Sigmoid colon (tissue), 7 donors: ENCODE measurements at regions of chr1 and their contacts with region 1.

Region 1: DNA sequence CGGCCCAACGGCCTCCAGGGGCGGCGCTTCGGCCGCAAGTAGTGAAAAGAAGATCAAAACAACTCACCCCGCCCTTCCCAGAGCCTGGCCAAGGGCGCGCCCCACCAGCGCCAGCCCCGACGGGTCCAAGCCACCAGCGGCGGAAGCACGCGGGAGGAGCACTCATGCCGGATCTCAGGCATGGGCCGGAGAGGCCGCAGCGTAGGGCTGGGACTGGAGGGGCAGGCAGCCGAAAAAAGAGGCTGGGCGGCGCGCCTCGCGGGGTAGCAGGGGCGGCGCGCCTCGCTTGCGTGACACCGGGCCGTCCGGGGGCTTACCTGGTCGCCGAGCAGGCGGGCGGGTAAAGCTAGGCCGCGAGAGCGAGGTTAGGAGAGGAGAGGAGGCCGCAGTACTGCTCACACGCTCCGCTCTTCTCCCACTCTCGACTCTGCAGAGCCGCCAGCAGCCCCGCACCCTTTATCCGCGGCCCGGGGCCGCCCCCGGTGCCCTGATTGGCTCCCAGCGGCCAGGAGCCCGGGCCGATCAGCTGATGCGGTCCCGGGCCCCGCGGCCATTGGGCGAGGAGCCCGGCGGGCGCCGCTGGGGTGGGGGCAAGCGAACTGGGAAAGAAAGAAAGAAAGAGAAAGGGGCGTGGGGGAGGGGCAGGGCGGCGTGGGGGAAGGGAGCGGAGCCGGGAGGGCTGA is at the start of gene GLUL:
- DNase-seq: peak; percentile 98
- H3K4me3 ChIP-seq: peak within 1 kb of the TSS; percentile 86 to 96 (median 92)
- H3K27ac ChIP-seq: peak within 1 kb of the TSS; percentile 97 to 100 (median 99)
- H3K4me1 ChIP-seq: peaks cover 0 to 40% (median 31%) of the 10 kb centered on the region in 4 donors
- H3K27me3 ChIP-seq: no peaks in the 10 kb centered on the region
- CTCF ChIP-seq: peak in 2 of 4 experiments; percentile 32 to 40
- EP300 ChIP-seq: no peak
- POLR2A ChIP-seq: peak; percentile 95 to 97
- total RNA-seq, gene GLUL: 757 to 1,489 (median 1,456) TPM

Region 2: DNA sequence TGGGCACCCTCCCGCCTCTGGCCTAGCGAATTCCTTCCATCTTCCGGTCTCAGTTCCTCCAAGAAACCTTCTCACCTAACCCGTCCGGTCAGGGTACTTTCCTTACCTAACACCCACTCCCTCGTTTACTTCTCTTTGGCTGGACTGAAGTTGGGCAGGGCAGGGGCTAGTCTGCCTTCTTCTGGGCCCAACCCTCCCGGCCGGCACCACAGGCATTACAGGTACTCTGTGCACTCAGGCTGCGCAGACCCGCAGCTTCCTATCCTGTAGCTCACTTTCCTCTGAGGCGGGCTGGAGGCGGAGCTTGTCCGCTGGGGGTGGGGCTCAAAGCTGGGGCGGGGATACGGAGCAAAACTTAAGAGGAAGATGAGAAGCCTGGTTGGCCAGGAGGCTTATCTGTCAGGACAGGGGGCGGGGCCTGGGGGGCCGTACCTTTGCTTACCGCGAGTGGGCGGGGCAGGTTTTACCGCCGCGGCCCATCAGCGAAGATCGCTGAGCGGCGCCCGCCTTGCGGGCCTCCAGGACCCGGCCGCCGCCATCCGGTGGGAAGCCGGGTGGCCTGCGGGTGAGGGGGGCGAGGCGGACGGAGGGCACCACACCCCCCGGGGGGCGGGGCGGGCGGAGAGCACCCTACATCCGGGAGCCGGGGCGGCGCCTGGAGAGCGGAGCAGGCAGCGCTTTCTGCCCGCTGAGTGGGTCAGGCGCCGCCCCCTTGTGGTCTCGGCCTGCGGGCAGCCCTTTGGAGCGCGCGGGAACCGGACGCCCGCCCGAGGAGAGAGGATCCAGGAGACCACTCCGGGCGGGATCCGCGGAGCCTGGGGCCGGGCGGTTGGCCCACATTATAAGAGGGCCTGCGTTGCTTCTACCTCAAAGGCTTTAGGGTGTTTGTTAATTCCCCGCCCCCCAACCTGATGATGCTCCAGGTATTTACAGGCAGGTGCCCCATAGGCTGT is 361.8 kb before region 1 on chr1:
- intact Hi-C with region 1: loop called (anchors 2 kb)
- DNase-seq: peak; percentile 98
- H3K4me3 ChIP-seq: peak overlapping the region; percentile 50 to 68 (median 55)
- H3K27ac ChIP-seq: peak overlapping the region; percentile 66 to 88 (median 76)
- H3K4me1 ChIP-seq: peaks cover 0 to 9% (median 4%) of the 10 kb centered on the region in 4 donors
- H3K27me3 ChIP-seq: no peaks in the 10 kb centered on the region
- CTCF ChIP-seq: peak; percentile 19 to 60 (median 32)
- EP300 ChIP-seq: no peak
- POLR2A ChIP-seq: peak; percentile 20 to 53

Region 3: GRCh38 chr1:182143154-182143657 is 248.3 kb before region 1 on chr1:
- intact Hi-C with region 1: loop called (anchors 1 kb)
- DNase-seq: peak; percentile 96
- H3K4me3 ChIP-seq: no peak overlapping the region
- H3K27ac ChIP-seq: peak overlapping the region; percentile 90 to 94 (median 93)
- H3K4me1 ChIP-seq: peaks cover 0 to 30% (median 27%) of the 10 kb centered on the region in 4 donors
- H3K27me3 ChIP-seq: no peaks in the 10 kb centered on the region
- CTCF ChIP-seq: peak; percentile 86 to 97 (median 95)
- EP300 ChIP-seq: no peak
- POLR2A ChIP-seq: no peak

Region 4: GRCh38 chr1:182301467-182302198 is 89.9 kb before region 1 on chr1:
- intact Hi-C with region 1: loop called (anchors 2 kb)
- DNase-seq: peak; percentile 71
- H3K4me3 ChIP-seq: no peak overlapping the region
- H3K27ac ChIP-seq: peak overlapping the region in 1 of 4 donors; percentile 10
- H3K4me1 ChIP-seq: peaks cover 0 to 38% (median 9%) of the 10 kb centered on the region in 4 donors
- H3K27me3 ChIP-seq: no peaks in the 10 kb centered on the region
- CTCF ChIP-seq: no peak
- EP300 ChIP-seq: no peak
- POLR2A ChIP-seq: no peak

Region 5: DNA sequence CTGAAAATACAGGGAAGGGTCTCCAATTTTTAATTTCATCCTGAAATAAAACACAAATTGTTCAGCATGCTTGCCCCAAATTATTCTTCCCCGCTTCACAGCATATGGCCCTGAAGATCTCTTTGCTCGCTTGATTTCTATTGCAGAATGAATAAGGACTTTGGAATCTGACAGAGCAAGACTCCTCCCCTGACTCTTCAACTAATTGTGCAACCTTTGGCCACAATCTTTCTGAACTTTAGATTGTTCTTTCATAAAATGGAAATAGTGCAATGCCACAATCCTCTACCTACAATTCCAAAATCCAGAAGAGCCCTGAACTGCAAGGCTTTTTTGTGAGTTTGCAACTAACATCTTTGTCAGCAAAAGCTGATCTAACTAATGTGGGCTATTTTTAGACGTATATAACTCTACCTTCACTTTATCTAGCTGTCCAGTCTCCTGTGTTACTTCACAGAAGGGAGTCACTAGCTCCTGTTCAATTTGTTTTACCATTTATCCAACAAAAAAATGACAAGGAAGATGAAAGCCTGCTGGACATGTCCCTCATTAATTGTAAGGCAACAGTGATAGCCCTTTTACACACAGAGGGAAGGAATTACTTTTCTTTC is 184.1 kb after region 1 on chr1:
- intact Hi-C with region 1: no loop called
- DNase-seq: no peak
- H3K4me3 ChIP-seq: no peak overlapping the region
- H3K27ac ChIP-seq: no peak overlapping the region
- H3K4me1 ChIP-seq: no peaks in the 10 kb centered on the region
- H3K27me3 ChIP-seq: no peaks in the 10 kb centered on the region
- CTCF ChIP-seq: no peak
- EP300 ChIP-seq: no peak
- POLR2A ChIP-seq: no peak

Region 6: DNA sequence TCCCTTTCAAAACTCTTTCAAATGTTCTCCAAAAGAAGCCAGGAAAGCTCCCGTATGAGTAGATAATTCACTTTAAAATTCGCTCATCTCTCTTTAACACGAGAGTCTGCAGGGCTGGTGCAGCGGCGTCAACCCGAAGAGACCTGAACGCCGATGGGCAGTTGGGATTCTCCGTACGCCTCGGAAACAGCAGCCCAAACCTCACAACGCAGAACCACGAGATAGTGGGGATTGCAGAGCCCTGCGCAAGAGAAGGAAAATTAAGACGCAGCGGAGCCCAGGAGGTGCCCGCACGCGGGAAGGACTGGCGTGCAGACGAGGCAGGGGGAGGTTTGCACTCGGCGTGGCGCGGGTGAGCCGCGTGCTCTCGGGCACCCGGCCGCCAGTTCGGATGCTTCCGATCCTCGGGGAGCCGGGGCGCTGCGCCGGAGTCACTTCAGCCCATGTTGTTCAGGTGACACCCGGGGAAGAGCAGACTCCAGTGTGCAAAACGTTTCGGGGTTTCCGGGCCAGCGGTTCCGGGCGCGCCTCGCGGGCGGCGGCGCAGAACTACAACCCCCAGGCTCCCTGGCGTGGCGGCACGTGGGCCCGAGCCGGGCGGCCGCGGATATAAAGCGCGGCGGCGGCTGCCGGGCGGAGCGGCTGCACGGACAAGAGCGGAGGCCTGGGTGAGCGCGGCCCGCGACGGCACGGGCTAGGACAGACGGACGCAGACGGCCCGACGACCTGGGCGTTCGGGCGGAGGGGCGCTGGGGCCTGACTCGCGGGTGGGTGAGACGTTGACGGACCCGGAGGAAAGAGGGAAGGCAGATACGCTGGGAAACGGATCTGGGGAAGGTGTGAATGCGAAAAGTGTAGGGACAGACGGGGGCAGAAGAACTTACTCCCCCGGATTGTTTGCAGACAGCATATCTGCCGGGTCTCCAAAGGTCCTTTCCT is 397.9 kb after region 1 on chr1 and contains the start of gene NPL:
- intact Hi-C with region 1: loop called (anchors 10 kb)
- DNase-seq: peak; percentile 90
- H3K4me3 ChIP-seq: peak within 1 kb of the TSS; percentile 56 to 70 (median 64)
- H3K27ac ChIP-seq: peak within 1 kb of the TSS; percentile 74 to 85 (median 82)
- H3K4me1 ChIP-seq: peaks cover 0 to 14% (median 7%) of the 10 kb centered on the region in 4 donors
- H3K27me3 ChIP-seq: no peaks in the 10 kb centered on the region
- CTCF ChIP-seq: no peak
- EP300 ChIP-seq: no peak
- POLR2A ChIP-seq: peak; percentile 16 to 25
- total RNA-seq, gene NPL: 7.2 to 13.0 (median 11.1) TPM